Naive thymus-derived CD4-positive, alpha-beta T cell (primary cell): ENCODE measurements at regions of chr1 and their contacts with region 1.

Region 1: DNA sequence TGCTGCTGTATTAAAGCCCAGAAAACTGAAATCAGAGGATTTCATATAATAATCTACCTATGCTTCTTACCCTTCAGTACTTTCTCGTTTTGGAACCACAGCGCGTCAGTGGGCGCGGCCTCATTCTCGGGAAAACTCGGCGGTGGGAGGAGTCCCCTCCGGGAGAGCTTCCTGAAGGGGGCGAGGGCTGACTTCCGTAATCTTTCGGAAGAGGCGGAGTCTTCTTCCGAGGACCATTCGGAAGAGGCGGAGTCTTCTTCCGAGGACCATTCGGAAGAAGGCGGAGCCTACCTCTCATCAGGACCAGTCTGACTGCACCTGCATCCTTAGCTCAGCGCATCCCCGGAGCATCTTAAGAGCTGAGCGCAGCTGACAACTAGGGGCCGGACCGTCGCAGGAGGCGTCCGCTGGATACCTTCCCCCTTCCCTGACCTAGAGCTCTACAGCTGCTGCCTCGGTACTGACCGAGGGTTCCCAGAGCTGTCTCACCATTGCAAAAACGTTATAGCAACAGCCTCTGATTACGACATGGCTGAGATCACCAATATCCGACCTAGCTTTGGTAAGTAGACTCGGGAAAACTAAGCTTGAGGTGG is at the start of gene SYT11:
- DNase-seq: peak; percentile 78 to 93 (median 90)
- ATAC-seq: peak; percentile 90
- H3K4me3 ChIP-seq: peak within 1 kb of the TSS; percentile 62
- H3K4me3 Mint-ChIP-seq: peak within 1 kb of the TSS; percentile 75 to 95 (median 92)
- H3K27ac ChIP-seq: peak within 1 kb of the TSS; percentile 72
- H3K27ac Mint-ChIP-seq: peak within 1 kb of the TSS; percentile 64 to 97 (median 86)
- H3K4me1 ChIP-seq: peaks cover 17 to 25% of the 10 kb centered on the region in 2 donors
- H3K4me1 Mint-ChIP-seq: peaks cover 0 to 51% (median 39%) of the 10 kb centered on the region in 7 donors
- H3K27me3 ChIP-seq: no peaks in the 10 kb centered on the region
- H3K27me3 Mint-ChIP-seq: peaks cover 0 to 24% (median 11%) of the 10 kb centered on the region in 5 donors
- total RNA-seq, gene SYT11: 1.4 to 22.9 (median 2.7) TPM

Region 2: GRCh38 chr1:154784924-154785531 is 1074.3 kb before region 1 on chr1:
- CTCF ChIA-PET with region 1: no interaction called
- POLR2A ChIA-PET with region 1: no interaction called
- intact Hi-C with region 1: loop called in 1 of 2 experiments (anchors 5 kb)
- DNase-seq: peak in 8 of 9 donors; percentile 37 to 87 (median 84)
- ATAC-seq: peak; percentile 94
- H3K4me3 ChIP-seq: peak overlapping the region; percentile 16
- H3K4me3 Mint-ChIP-seq: peak overlapping the region; percentile 45 to 84 (median 69)
- H3K27ac ChIP-seq: peak overlapping the region; percentile 78
- H3K27ac Mint-ChIP-seq: peak overlapping the region; percentile 94 to 99 (median 98)
- H3K4me1 ChIP-seq: peaks cover 15 to 33% of the 10 kb centered on the region in 2 donors
- H3K4me1 Mint-ChIP-seq: peaks cover 25 to 73% (median 54%) of the 10 kb centered on the region in 7 donors
- H3K27me3 ChIP-seq: no peaks in the 10 kb centered on the region
- H3K27me3 Mint-ChIP-seq: no peaks in the 10 kb centered on the region

Region 3: GRCh38 chr1:155208541-155209311 is 650.6 kb before region 1 on chr1 and contains the start of gene MTX1:
- CTCF ChIA-PET with region 1: no interaction called
- POLR2A ChIA-PET with region 1: no interaction called
- intact Hi-C with region 1: no loop called
- DNase-seq: peak; percentile 83 to 91 (median 88)
- ATAC-seq: peak; percentile 89
- H3K4me3 ChIP-seq: peak within 1 kb of the TSS; percentile 100
- H3K4me3 Mint-ChIP-seq: peak within 1 kb of the TSS; percentile 81 to 92 (median 88)
- H3K27ac ChIP-seq: peak within 1 kb of the TSS; percentile 100
- H3K27ac Mint-ChIP-seq: peak within 1 kb of the TSS; percentile 92 to 99 (median 96)
- H3K4me1 ChIP-seq: peaks cover 20 to 21% of the 10 kb centered on the region in 2 donors
- H3K4me1 Mint-ChIP-seq: peaks cover 19 to 30% (median 24%) of the 10 kb centered on the region in 7 donors
- H3K27me3 ChIP-seq: no peaks in the 10 kb centered on the region
- H3K27me3 Mint-ChIP-seq: no peaks in the 10 kb centered on the region
- total RNA-seq, gene MTX1: 19.5 to 40.8 (median 22.0) TPM

Region 4: GRCh38 chr1:155688324-155689080 is 170.8 kb before region 1 on chr1 and contains the start of gene YY1AP1:
- CTCF ChIA-PET with region 1: no interaction called
- POLR2A ChIA-PET with region 1: interaction called, 3 read pairs
- intact Hi-C with region 1: loop called (anchors 1 to 2 kb)
- DNase-seq: peak; percentile 87 to 96 (median 92)
- ATAC-seq: peak; percentile 96
- H3K4me3 ChIP-seq: peak within 1 kb of the TSS; percentile 99
- H3K4me3 Mint-ChIP-seq: peak within 1 kb of the TSS; percentile 93 to 98 (median 96)
- H3K27ac ChIP-seq: peak within 1 kb of the TSS; percentile 91
- H3K27ac Mint-ChIP-seq: peak within 1 kb of the TSS; percentile 90 to 98 (median 96)
- H3K4me1 ChIP-seq: peaks cover 15 to 30% of the 10 kb centered on the region in 2 donors
- H3K4me1 Mint-ChIP-seq: peaks cover 37 to 81% (median 70%) of the 10 kb centered on the region in 7 donors
- H3K27me3 ChIP-seq: no peaks in the 10 kb centered on the region
- H3K27me3 Mint-ChIP-seq: no peaks in the 10 kb centered on the region
- total RNA-seq, gene YY1AP1: 81.2 to 130 (median 88.2) TPM

Region 5: DNA sequence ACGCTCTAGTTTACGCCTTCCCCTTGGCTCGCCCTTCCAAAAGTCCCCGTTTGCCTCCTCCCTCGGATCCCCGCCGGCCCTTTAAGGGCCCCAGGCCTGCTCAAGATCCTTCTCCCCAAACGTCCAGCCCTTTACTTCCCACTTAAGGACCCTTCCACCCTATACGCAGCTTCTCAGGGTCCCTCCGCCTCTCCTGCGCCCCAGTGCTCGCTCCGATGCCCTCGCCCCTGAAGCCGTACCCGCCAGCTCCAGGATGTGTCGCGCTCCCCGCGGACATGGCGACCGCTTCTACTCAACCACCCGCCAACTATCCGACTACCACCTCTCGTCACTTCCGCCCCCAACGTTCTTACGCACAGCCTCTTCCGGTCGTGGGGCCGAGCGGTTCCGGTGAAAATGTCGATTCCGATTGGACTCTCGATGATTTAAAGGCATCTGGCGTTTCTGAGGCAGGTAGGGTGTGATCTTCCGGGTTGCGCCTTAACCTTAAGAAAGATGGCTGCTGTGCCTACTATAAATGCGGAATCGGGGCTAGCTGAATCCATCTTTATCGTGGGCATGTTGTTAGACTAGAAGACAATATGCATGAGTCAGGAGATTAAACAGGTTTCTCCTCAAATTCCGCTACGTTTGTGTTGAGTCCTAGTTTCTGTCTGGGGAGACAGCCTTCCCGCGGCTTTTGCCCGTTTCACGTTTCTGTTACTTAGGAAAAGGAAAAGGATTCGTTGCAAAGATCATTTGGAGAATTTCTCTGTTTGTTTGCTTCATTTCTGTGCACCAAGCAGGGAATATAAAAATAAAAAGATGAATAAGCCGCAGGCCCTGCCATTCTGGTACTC is 75.0 kb after region 1 on chr1 and contains the start of gene KHDC4:
- CTCF ChIA-PET with region 1: no interaction called
- POLR2A ChIA-PET with region 1: interaction called, 4 read pairs
- intact Hi-C with region 1: loop called (anchors 1 kb)
- DNase-seq: peak; percentile 79 to 98 (median 97)
- ATAC-seq: peak; percentile 97
- H3K4me3 ChIP-seq: peak within 1 kb of the TSS; percentile 87
- H3K4me3 Mint-ChIP-seq: no peak within 1 kb of the TSS
- H3K27ac ChIP-seq: peak within 1 kb of the TSS; percentile 89
- H3K27ac Mint-ChIP-seq: peak within 1 kb of the TSS in 1 of 9 donors; percentile 22
- H3K4me1 ChIP-seq: peaks cover 40 to 42% of the 10 kb centered on the region in 2 donors
- H3K4me1 Mint-ChIP-seq: peaks cover 15 to 42% (median 37%) of the 10 kb centered on the region in 7 donors
- H3K27me3 ChIP-seq: no peaks in the 10 kb centered on the region
- H3K27me3 Mint-ChIP-seq: no peaks in the 10 kb centered on the region
- total RNA-seq, gene KHDC4: 64.6 to 117 (median 79.8) TPM

Region 6: GRCh38 chr1:156212833-156213643 is 353.7 kb after region 1 on chr1 and contains the start of gene PMF1:
- CTCF ChIA-PET with region 1: no interaction called
- POLR2A ChIA-PET with region 1: no interaction called
- intact Hi-C with region 1: loop called in 1 of 2 experiments (anchors 5 kb)
- DNase-seq: peak; percentile 83 to 97 (median 95)
- ATAC-seq: peak; percentile 98
- H3K4me3 ChIP-seq: peak within 1 kb of the TSS; percentile 85
- H3K4me3 Mint-ChIP-seq: peak within 1 kb of the TSS; percentile 90 to 99 (median 96)
- H3K27ac ChIP-seq: peak within 1 kb of the TSS; percentile 94
- H3K27ac Mint-ChIP-seq: peak within 1 kb of the TSS; percentile 98 to 100 (median 99)
- H3K4me1 ChIP-seq: peaks cover 8 to 17% of the 10 kb centered on the region in 2 donors
- H3K4me1 Mint-ChIP-seq: peaks cover 20 to 58% (median 41%) of the 10 kb centered on the region in 7 donors
- H3K27me3 ChIP-seq: no peaks in the 10 kb centered on the region
- H3K27me3 Mint-ChIP-seq: no peaks in the 10 kb centered on the region
- total RNA-seq, gene PMF1: 42.2 to 76.1 (median 58.2) TPM